Naive thymus-derived CD8-positive, alpha-beta T cell (primary cell): ENCODE measurements at regions of chr1 and their contacts with region 1.

Region 1: GRCh38 chr1:21294266-21294989 is 4.2 kb upstream of the ECE1 start:
- DNase-seq: peak; percentile 56 to 95 (median 88)
- ATAC-seq: peak; percentile 73 to 83
- H3K4me3 Mint-ChIP-seq: peak overlapping the region; percentile 82 to 95 (median 89)
- H3K27ac Mint-ChIP-seq: peak overlapping the region; percentile 95 to 100 (median 98)
- H3K4me1 Mint-ChIP-seq: peaks cover 33 to 89% (median 79%) of the 10 kb centered on the region in 4 donors
- H3K27me3 Mint-ChIP-seq: no peaks in the 10 kb centered on the region

Region 2: GRCh38 chr1:20867062-20867461 is 427.4 kb before region 1 on chr1:
- POLR2A ChIA-PET with region 1: no interaction called
- DNase-seq: no peak
- ATAC-seq: no peak
- H3K4me3 Mint-ChIP-seq: no peak overlapping the region
- H3K27ac Mint-ChIP-seq: no peak overlapping the region
- H3K4me1 Mint-ChIP-seq: peaks cover 0 to 3% (median 0%) of the 10 kb centered on the region in 4 donors
- H3K27me3 Mint-ChIP-seq: no peaks in the 10 kb centered on the region

Region 3: DNA sequence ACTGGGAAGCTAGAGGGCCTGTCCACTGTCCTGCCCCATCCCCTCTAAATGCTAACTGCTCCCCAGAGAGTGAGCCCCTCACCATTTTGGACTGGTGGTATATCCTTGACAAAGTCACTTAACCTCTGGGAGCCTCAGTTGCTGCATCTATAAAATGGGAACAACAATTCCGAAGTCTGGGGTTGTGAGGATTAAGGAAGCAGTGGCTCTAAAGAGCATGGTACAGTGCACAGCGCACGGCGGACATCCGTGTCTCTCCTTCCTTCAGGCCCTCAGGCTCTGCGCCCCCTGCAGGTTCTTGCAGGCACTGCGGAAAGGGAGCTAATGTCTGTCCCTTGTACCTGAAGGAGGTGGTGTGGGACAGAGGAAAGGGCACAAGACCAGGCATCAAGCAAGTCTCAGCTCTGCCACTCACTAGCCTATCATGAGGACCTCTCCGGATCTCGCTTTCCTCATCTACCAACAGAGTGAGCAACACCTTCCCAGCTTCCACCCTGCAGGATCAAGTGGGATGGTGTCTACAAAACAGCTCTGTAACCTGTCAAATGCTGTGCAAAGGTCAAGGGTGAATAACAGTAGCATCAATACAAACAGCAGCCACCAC is 24.2 kb before region 1 on chr1:
- POLR2A ChIA-PET with region 1: interaction called, 18 read pairs
- DNase-seq: peak; percentile 65 to 90 (median 78)
- ATAC-seq: peak; percentile 84 to 98
- H3K4me3 Mint-ChIP-seq: no peak overlapping the region
- H3K27ac Mint-ChIP-seq: peak overlapping the region in 7 of 10 donors; percentile 20 to 67 (median 33)
- H3K4me1 Mint-ChIP-seq: peaks cover 9 to 29% (median 15%) of the 10 kb centered on the region in 4 donors
- H3K27me3 Mint-ChIP-seq: no peaks in the 10 kb centered on the region

Region 4: GRCh38 chr1:21280011-21280471 is 14.4 kb before region 1 on chr1:
- POLR2A ChIA-PET with region 1: interaction called, 70 read pairs
- DNase-seq: peak in 3 of 10 donors; percentile 14 to 19 (median 15)
- ATAC-seq: peak; percentile 57 to 73
- H3K4me3 Mint-ChIP-seq: peak overlapping the region; percentile 46 to 87 (median 76)
- H3K27ac Mint-ChIP-seq: peak overlapping the region; percentile 89 to 97 (median 95)
- H3K4me1 Mint-ChIP-seq: peaks cover 19 to 56% (median 46%) of the 10 kb centered on the region in 4 donors
- H3K27me3 Mint-ChIP-seq: no peaks in the 10 kb centered on the region

Region 5: DNA sequence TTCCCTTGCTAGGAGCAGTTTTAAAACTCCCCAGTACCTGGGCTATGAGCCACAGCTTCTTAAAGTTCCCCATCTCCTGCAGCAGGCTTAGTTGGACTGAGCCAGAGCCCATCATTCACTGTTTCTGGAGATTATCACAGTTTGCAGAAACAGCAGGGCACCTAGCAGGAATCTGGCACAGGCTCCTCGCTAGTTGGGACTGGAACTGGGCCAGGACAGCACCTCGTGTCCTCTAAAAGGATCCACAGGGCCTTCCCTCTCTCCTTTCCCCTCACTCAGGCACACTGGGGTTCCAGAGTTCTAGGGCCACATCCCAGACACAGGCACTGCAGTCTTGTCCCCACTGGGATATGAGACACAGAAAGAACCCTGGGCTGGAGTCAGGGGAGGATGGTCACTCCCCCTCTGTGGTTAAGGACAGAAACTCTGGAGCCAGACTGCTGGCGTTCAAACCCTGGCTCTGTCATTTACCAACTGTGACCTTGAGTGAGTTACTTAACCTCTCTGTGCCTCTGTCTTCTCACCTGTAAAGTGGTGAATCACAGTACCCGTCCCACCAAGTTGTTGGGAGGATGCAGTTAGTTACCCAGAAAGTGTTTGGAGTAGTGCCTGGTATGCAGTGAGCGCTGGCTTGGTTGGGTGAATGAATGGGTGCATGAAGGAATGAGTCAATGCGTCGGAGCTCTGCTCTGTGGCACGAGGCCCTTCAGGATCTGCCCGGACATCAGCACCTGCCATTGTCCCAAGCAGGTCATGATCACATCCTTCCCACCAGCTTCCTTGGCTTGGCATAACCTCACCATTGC is 14.6 kb after region 1 on chr1:
- POLR2A ChIA-PET with region 1: interaction called, 35 read pairs
- DNase-seq: no peak
- ATAC-seq: no peak
- H3K4me3 Mint-ChIP-seq: peak overlapping the region in 1 of 10 donors; percentile 24
- H3K27ac Mint-ChIP-seq: peak overlapping the region in 5 of 10 donors; percentile 49 to 72 (median 61)
- H3K4me1 Mint-ChIP-seq: peaks cover 24 to 68% (median 45%) of the 10 kb centered on the region in 4 donors
- H3K27me3 Mint-ChIP-seq: no peaks in the 10 kb centered on the region

Region 6: GRCh38 chr1:21324368-21325141 is 30.1 kb after region 1 on chr1:
- POLR2A ChIA-PET with region 1: interaction called, 218 read pairs
- DNase-seq: peak in 7 of 10 donors; percentile 28 to 72 (median 41)
- ATAC-seq: peak; percentile 74 to 80
- H3K4me3 Mint-ChIP-seq: peak overlapping the region; percentile 69 to 89 (median 82)
- H3K27ac Mint-ChIP-seq: peak overlapping the region; percentile 85 to 97 (median 96)
- H3K4me1 Mint-ChIP-seq: peaks cover 47 to 92% (median 85%) of the 10 kb centered on the region in 4 donors
- H3K27me3 Mint-ChIP-seq: no peaks in the 10 kb centered on the region

Region 7: GRCh38 chr1:21334214-21335087 is 40.0 kb after region 1 on chr1:
- POLR2A ChIA-PET with region 1: interaction called, 122 read pairs
- DNase-seq: peak; percentile 44 to 91 (median 80)
- ATAC-seq: peak; percentile 87 to 89
- H3K4me3 Mint-ChIP-seq: peak overlapping the region; percentile 78 to 93 (median 91)
- H3K27ac Mint-ChIP-seq: peak overlapping the region; percentile 94 to 99 (median 97)
- H3K4me1 Mint-ChIP-seq: peaks cover 36 to 91% (median 87%) of the 10 kb centered on the region in 4 donors
- H3K27me3 Mint-ChIP-seq: no peaks in the 10 kb centered on the region

Region 8: DNA sequence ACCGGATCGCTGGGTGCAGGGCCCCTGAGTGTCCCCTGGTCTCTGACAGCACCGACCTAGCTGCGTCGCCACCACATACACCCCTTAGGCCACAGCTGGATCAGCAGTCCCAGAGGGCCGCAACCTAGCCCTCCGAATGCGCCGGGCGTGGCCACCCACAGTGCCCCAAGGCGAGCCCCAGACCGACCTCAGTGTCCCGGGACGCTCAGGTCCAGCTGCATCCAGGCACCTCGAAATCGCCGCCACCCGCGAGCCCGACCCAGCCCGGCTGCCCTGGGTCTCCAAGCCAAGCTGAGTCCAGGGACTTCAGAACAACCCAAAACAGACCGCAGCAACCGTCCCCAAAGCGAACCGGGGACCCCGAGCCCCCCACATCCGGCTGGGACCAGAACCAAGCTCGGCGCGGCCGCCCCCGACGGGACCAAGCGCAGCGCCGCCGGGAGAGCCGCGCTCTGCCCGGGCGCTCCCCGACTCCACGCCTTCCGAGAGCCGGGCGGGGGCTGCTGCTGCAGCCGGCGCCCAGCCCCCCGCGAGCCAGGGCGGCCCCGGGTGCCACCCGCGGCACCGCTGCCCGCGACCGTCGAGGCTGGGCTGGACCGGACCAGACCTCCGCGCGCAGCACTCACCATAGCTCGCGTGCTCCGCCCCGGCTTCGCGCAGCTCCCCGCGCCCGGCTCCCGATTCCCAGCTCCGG is 50.5 kb after region 1 on chr1:
- POLR2A ChIA-PET with region 1: interaction called, 122 read pairs
- DNase-seq: peak in 1 of 10 donors; percentile 36
- ATAC-seq: peak; percentile 30 to 56
- H3K4me3 Mint-ChIP-seq: peak overlapping the region in 9 of 10 donors; percentile 82 to 92 (median 88)
- H3K27ac Mint-ChIP-seq: peak overlapping the region; percentile 44 to 85 (median 75)
- H3K4me1 Mint-ChIP-seq: peaks cover 36 to 48% (median 44%) of the 10 kb centered on the region in 4 donors
- H3K27me3 Mint-ChIP-seq: no peaks in the 10 kb centered on the region

Region 9: DNA sequence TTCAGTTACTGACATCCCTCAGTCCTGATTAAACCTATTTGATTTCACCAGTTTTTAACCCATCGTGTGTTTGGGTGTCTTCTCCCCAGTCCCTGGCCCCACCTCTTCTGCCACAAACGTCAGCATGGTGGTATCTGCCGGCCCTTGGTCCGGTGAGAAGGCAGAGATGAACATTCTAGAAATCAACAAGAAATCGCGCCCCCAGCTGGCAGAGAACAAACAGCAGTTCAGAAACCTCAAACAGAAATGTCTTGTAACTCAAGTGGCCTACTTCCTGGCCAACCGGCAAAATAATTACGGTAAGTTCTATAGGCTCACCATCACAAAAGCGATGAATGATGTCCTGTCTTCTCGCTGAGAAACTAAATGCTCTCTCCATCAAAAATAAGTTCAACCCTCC is 174.2 kb after region 1 on chr1:
- POLR2A ChIA-PET with region 1: no interaction called
- DNase-seq: peak in 1 of 10 donors; percentile 9
- ATAC-seq: no peak
- H3K4me3 Mint-ChIP-seq: no peak overlapping the region
- H3K27ac Mint-ChIP-seq: peak overlapping the region in 2 of 10 donors; percentile 1 to 27
- H3K4me1 Mint-ChIP-seq: peaks cover 0 to 5% (median 1%) of the 10 kb centered on the region in 4 donors
- H3K27me3 Mint-ChIP-seq: no peaks in the 10 kb centered on the region